Right ventricle myocardium inferior (tissue), 1 donor: ENCODE measurements at regions of chr13 and their contacts with region 1.

Region 1: DNA sequence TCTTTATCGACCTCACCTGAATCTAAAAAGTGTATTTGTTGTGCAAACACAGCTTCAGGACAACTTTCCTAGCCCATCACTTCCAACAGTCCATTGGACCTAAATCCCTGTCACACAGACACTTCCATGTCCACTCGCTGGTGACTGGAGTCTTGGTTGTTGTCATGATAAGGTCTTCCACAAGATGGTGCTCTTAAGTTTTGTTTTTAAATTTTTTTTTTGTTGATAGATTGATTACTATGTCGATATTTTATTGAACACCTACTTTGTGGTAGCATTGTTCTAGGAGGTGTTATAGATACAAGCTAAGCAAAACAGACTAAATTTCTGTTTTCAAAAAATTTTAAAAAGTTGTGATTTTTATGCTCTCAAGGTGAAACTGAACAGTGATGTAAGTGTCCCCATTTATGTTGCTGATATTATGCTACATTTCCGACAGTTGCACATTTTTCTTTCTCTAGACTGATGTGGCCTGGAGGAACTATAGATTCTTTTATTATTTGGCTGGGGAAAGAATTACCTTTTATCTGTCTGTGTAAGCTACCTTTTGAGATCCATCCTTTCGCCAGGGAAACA is 8.1 kb upstream of the ERICH6B start:
- DNase-seq: no peak
- ATAC-seq: no peak

Region 2: GRCh38 chr13:45521297-45521696 is 102.3 kb before region 1 on chr13:
- intact Hi-C with region 1: no loop called
- DNase-seq: no peak
- ATAC-seq: peak; percentile 54

Region 3: GRCh38 chr13:45658586-45659235 is 35.1 kb after region 1 on chr13:
- intact Hi-C with region 1: no loop called
- DNase-seq: no peak
- ATAC-seq: no peak

Region 4: GRCh38 chr13:45674908-45675307 is 51.3 kb after region 1 on chr13:
- intact Hi-C with region 1: no loop called
- DNase-seq: no peak
- ATAC-seq: no peak

Region 5: GRCh38 chr13:45781553-45782326 is 158.1 kb after region 1 on chr13:
- intact Hi-C with region 1: loop called (anchors 10 kb)
- DNase-seq: no peak
- ATAC-seq: peak; percentile 75

Region 6: DNA sequence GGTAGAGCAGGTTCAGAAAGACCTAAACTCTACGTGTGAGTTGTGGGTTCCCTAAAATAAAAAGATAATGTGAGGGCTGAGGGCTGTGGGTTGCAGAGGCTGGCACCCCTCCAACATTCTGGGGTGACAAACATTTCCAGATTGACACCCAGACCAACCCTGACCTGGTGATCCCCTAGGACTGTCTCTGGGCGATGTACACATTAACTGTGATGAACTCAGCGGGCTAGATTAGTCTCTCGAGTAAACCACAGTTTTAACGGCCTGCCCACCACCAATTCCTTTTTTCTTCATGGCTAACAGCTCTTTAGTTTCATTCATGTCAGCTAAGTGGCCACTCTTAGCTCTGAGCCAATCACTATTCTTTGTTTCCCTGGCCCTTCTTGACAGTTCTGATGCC is 203.1 kb after region 1 on chr13:
- intact Hi-C with region 1: no loop called
- DNase-seq: no peak
- ATAC-seq: no peak

Region 7: DNA sequence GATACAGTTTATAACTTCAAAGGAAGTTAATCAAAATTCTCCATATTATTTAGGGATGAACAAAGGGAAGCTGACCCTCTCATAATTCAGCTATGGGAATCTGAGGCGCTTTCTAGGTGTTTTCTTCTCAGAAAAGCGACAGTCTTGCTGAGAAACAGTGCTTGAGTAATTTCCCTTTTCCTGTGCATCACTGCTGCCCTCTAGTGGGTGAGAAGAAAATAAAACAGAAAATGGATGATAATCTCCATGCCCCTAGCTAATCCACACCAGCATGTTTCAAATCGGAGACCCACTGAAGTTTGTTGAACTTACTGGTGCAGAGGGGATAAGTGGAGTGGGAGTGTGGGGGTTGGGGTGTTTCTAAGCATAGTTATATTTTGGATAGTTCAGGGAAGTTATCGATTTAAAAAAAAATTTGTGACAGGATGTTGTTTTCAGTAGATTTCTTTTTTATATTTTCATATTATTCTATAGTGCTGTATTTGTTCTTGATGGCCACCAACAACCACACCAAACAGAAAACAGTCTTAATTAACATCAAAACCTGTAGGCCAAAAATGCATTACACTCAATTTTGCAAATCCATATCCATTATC is 537.0 kb after region 1 on chr13:
- intact Hi-C with region 1: loop called (anchors 5 kb)
- DNase-seq: no peak
- ATAC-seq: peak; percentile 52